ENCODE measurements at regions of chr4 and their contacts with region 1.

Region 1: GRCh38 chr4:12852338-12853307 is 631.5 kb downstream of the RAB28 start:
- DNase-seq: peak; percentile 44
- H3K4me3 ChIP-seq: no peak overlapping the region
- H3K27ac ChIP-seq: no peak overlapping the region
- H3K4me1 ChIP-seq: no peaks in the 10 kb centered on the region
- CTCF ChIP-seq: peak; percentile 77

Region 2: DNA sequence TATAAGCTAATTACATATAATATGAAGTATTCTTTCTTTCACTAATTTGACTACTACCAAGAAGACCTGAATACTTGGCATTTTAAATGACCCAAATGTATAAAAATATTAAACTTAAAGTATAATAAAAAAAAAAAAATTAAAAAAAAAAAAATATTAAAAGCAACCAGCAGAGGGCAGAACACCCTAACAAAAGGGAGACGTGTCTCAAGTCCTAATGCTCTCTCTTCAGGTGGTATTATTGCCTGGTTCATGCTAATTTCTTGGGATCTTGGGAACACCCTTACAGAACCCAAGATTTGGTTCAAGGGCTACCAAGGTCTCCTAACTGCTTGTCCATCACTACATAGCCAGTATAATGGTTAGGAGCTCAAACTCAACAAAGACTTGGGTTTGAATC is 123.2 kb before region 1 on chr4:
- CTCF ChIA-PET with region 1: no interaction called
- POLR2A ChIA-PET with region 1: no interaction called
- intact Hi-C with region 1: loop called (anchors 5 kb)
- DNase-seq: peak; percentile 39
- H3K4me3 ChIP-seq: no peak overlapping the region
- H3K27ac ChIP-seq: no peak overlapping the region
- H3K4me1 ChIP-seq: peaks cover 2% of the 10 kb centered on the region
- CTCF ChIP-seq: peak; percentile 75

Region 3: DNA sequence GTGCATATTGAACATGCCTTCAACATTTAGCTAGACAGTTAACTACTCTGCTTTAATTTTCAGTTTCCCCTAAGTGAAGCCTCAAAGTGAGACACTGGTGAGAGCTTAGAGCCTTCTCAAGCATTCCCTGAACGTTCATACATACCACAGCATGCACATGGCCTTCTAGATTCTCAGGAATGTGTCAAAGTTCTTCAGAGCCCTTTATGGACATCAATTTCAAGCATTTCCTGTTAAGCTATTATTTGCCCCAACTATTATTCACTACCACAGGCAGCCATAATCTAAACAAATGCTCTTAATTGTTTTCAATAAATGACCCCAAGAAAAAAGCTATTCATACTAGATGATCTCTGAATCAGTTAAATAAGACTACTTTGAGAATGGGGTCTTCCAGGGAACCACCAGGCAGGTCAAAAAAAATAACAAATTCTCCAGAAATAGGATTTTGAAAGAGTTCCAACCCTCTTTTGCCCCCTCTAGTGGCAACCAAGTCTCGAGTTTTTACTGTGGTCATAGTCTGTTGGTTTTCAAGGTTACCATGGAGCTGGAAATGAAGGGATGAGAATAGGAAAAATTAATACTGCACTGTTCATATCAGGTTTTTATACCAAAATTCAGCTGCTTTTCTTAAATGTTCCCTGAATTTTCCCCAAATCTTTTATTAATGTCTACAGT is 396.1 kb after region 1 on chr4:
- CTCF ChIA-PET with region 1: no interaction called
- POLR2A ChIA-PET with region 1: no interaction called
- intact Hi-C with region 1: loop called (anchors 10 kb)
- DNase-seq: no peak
- H3K4me3 ChIP-seq: no peak overlapping the region
- H3K27ac ChIP-seq: no peak overlapping the region
- H3K4me1 ChIP-seq: no peaks in the 10 kb centered on the region
- CTCF ChIP-seq: peak; percentile 69